Calu3 (cell line): ENCODE measurements at regions of chr2 and their contacts with region 1.

Region 1: DNA sequence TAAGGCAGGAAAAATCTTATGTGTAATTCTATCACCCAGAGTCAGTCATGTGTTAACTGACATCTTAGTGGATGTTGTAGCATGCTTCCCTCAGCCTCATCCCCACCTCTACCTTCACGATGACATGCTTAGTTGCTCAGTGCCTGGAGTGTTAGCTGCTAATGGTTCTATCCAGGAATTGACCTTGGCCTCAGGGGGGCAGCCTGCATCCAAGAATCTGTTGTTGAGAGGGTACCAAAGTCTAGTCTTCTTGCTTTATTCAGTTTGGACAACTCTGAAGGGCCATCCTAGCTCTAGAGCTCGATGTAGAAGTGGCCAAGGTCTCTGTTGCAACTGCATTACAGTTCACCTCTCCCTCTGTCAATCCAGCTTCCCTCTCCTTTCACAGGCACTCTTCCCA is 61.2 kb downstream of the ACYP2 start:
- DNase-seq: peak; percentile 42
- H3K4me3 Mint-ChIP-seq: no peak overlapping the region
- H3K27ac Mint-ChIP-seq: no peak overlapping the region
- H3K4me1 Mint-ChIP-seq: no peaks in the 10 kb centered on the region
- H3K27me3 Mint-ChIP-seq: no peaks in the 10 kb centered on the region
- CTCF ChIP-seq: no peak

Region 2: GRCh38 chr2:54512663-54513362 is 336.2 kb after region 1 on chr2:
- CTCF ChIA-PET with region 1: no interaction called
- intact Hi-C with region 1: loop called (anchors 10 kb)
- DNase-seq: no peak
- H3K4me3 Mint-ChIP-seq: no peak overlapping the region
- H3K27ac Mint-ChIP-seq: no peak overlapping the region
- H3K4me1 Mint-ChIP-seq: no peaks in the 10 kb centered on the region
- H3K27me3 Mint-ChIP-seq: no peaks in the 10 kb centered on the region
- CTCF ChIP-seq: no peak